ENCODE measurements at regions of chr1 and their contacts with region 1.

Region 1: GRCh38 chr1:155485945-155486344 is 76.7 kb downstream of the ASH1L start:
- DNase-seq: peak; percentile 22
- CTCF ChIP-seq: no peak

Region 2: GRCh38 chr1:155504207-155504606 is 18.3 kb after region 1 on chr1:
- CTCF ChIA-PET with region 1: interaction called, 10 read pairs
- POLR2A ChIA-PET with region 1: no interaction called
- DNase-seq: peak; percentile 38
- CTCF ChIP-seq: peak; percentile 36

Region 3: DNA sequence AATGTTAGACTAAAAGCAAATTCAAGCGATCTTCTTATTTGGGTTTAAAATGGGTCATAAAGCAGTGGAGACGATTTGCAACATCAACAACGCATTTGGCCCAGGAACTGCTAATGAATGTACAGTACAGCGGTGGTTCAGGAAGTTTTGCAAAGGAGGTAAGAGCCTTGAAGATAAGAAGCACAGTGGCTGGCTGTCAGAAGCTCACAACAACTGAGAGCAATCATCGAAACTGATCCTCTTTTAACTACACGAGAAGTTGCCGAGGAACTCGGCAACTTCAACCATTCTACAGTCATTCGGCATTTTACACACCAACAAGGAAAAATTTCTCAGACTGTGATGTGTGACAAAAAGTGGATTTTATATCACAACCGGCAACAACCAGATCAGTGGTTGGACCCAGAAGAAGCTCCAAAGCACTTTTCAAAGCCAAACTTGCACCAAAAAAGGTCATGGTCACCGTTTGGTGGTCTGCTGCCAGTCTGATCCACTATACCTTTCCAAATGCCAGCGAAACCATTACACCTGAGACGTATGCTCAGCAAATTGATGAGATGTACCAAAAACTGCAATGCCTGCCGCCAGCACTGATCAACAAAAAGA is 28.7 kb after region 1 on chr1:
- CTCF ChIA-PET with region 1: no interaction called
- POLR2A ChIA-PET with region 1: no interaction called
- DNase-seq: no peak
- CTCF ChIP-seq: no peak